Heart right ventricle (tissue), 16 donors: ENCODE measurements at regions of chr3 and their contacts with region 1.

Region 1: DNA sequence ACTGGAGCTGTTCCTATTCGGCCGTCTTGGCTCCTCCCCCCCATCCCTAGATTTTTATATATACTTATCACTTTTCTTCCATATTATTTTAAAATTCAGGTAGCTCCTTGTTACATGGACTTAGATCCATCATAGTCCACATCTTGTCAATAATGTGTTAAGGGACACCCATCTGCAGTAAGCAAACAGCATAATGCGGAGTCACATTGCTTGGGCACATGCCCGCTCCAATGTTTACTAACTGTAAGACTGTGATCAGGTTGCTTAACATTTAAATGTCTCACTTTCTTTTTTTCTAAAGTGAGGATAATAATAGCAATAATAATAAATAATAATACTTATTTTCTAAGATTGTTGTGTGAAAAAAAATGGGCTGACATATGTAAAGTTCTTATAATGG is 303.2 kb upstream of the SOX14 start:
- DNase-seq: no peak
- ATAC-seq: no peak
- H3K4me3 ChIP-seq: no peak overlapping the region
- H3K27ac ChIP-seq: no peak overlapping the region
- H3K4me1 ChIP-seq: no peaks in the 10 kb centered on the region
- H3K27me3 ChIP-seq: peaks cover 0 to 6% (median 0%) of the 10 kb centered on the region in 7 donors
- CTCF ChIP-seq: no peak

Region 2: DNA sequence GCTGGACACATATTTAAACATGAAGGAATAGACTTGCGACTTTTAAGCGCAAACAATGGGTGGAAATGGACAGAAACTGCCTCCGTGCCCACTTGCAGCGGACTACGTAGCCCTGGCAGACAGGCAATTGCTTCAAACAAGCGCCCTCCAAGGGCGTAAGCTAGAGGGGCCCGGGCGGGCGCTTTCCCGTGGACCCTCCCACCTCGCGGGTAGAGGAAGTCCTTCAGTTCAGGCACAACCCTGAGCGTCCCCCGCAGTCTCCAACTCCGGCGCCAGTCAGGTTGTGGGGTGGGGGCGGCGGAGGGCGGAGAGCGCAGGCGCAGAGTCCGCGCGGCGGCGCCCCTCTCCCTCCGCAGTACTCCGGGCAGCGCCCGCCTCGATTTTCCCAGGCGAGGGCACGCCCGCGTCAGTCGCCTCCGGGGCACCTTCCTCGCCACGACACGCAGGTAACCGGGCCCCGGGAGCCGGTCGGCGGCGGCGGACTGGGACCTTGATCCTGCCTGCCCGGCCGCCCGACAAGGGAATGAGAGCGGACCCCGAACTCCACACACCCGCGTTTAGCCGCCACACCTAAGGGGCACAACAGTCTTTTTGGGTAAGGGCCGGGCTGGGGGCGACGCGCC is 642.1 kb before region 1 on chr3 and contains the start of gene SLC35G2:
- intact Hi-C with region 1: no loop called
- DNase-seq: peak; percentile 61 to 72
- ATAC-seq: peak; percentile 75 to 93 (median 88)
- H3K4me3 ChIP-seq: peak within 1 kb of the TSS; percentile 59 to 77 (median 72)
- H3K27ac ChIP-seq: peak within 1 kb of the TSS; percentile 80 to 93 (median 90)
- H3K4me1 ChIP-seq: peaks cover 0 to 32% (median 17%) of the 10 kb centered on the region in 9 donors
- H3K27me3 ChIP-seq: peaks cover 0 to 43% (median 0%) of the 10 kb centered on the region in 7 donors
- CTCF ChIP-seq: peak in 4 of 9 donors; percentile 6 to 34 (median 28)
- total RNA-seq, gene SLC35G2: 1.7 to 5.1 (median 2.4) TPM

Region 3: GRCh38 chr3:137738710-137739109 is 277.8 kb after region 1 on chr3:
- intact Hi-C with region 1: loop called in 1 of 10 experiments (anchors 5 kb)
- DNase-seq: no peak
- ATAC-seq: no peak
- H3K4me3 ChIP-seq: no peak overlapping the region
- H3K27ac ChIP-seq: no peak overlapping the region
- H3K4me1 ChIP-seq: no peaks in the 10 kb centered on the region
- H3K27me3 ChIP-seq: peaks cover 0 to 7% (median 0%) of the 10 kb centered on the region in 7 donors
- CTCF ChIP-seq: no peak